ENCODE measurements at regions of chr10 and their contacts with region 1.

Region 1: DNA sequence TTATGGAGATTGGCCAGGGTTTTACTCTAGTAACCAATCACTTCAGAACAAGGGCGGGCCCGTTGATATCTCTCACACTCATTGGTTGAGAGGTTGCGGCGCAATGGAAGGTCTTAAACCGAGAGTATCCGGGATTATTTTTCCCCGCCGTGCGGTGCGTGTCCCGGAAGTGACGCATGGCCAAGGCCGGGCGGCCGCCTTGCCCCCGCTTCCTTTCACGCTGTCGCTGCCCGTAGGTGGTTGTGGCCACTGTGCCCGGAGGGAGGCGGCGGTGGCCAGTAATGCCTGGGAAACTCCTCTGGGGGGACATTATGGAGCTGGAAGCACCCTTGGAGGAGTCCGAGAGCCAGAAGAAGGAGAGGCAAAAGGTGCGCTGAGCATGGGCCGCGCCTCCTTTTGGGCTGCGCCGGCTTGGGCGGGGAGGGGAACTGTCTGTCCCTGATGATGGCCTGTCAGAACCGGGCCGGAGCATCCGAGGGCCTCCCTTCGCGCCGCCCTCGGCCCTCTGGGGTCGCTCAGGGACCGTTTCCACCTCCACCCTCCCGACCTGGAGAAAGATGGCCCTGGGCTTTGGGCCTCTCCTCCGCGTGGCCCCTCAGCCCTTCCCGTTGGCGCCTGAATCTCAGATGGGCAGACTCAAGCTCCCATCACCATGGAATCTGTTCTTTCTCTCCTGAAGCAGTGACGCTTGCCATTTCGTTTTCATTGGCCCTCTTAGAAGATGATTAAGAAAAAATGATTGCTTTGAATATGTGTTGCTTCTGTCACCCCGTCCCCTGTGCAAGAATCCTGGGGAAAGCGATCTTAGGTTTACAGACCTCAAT is at the start of gene DDX50:
- DNase-seq: peak; percentile 86 to 97 (median 95)
- ATAC-seq: peak; percentile 98
- H3K4me3 ChIP-seq: peak within 1 kb of the TSS; percentile 78
- H3K4me3 Mint-ChIP-seq: peak within 1 kb of the TSS; percentile 93 to 99 (median 97)
- H3K27ac ChIP-seq: peak within 1 kb of the TSS; percentile 95
- H3K27ac Mint-ChIP-seq: peak within 1 kb of the TSS; percentile 97 to 100 (median 99)
- H3K4me1 ChIP-seq: peaks cover 20 to 34% of the 10 kb centered on the region in 2 donors
- H3K4me1 Mint-ChIP-seq: peaks cover 28 to 53% (median 44%) of the 10 kb centered on the region in 7 donors
- H3K27me3 ChIP-seq: no peaks in the 10 kb centered on the region
- H3K27me3 Mint-ChIP-seq: no peaks in the 10 kb centered on the region
- total RNA-seq, gene DDX50: 28.3 to 49.3 (median 47.5) TPM

Region 2: GRCh38 chr10:68074775-68075549 is 826.4 kb before region 1 on chr10 and contains the start of gene HERC4:
- CTCF ChIA-PET with region 1: no interaction called
- POLR2A ChIA-PET with region 1: no interaction called
- intact Hi-C with region 1: loop called in 1 of 2 experiments (anchors 1 kb)
- DNase-seq: peak; percentile 80 to 91 (median 89)
- ATAC-seq: peak; percentile 97
- H3K4me3 ChIP-seq: peak within 1 kb of the TSS; percentile 91
- H3K4me3 Mint-ChIP-seq: peak within 1 kb of the TSS; percentile 91 to 98 (median 96)
- H3K27ac ChIP-seq: peak within 1 kb of the TSS; percentile 96
- H3K27ac Mint-ChIP-seq: peak within 1 kb of the TSS; percentile 89 to 95 (median 94)
- H3K4me1 ChIP-seq: peaks cover 15 to 21% of the 10 kb centered on the region in 2 donors
- H3K4me1 Mint-ChIP-seq: peaks cover 26 to 51% (median 41%) of the 10 kb centered on the region in 7 donors
- H3K27me3 ChIP-seq: peaks cover 0 to 3% of the 10 kb centered on the region in 2 donors
- H3K27me3 Mint-ChIP-seq: peaks cover 0 to 2% (median 0%) of the 10 kb centered on the region in 5 donors
- total RNA-seq, gene HERC4: 65.7 to 113 (median 78.6) TPM

Region 3: GRCh38 chr10:68471586-68472408 is 429.5 kb before region 1 on chr10 and contains the start of gene DNA2:
- CTCF ChIA-PET with region 1: no interaction called
- POLR2A ChIA-PET with region 1: no interaction called
- intact Hi-C with region 1: loop called in 1 of 2 experiments (anchors 1 kb)
- DNase-seq: peak; percentile 54 to 85 (median 67)
- ATAC-seq: peak; percentile 84
- H3K4me3 ChIP-seq: peak within 1 kb of the TSS; percentile 72
- H3K4me3 Mint-ChIP-seq: peak within 1 kb of the TSS; percentile 95 to 100 (median 98)
- H3K27ac ChIP-seq: peak within 1 kb of the TSS; percentile 69
- H3K27ac Mint-ChIP-seq: peak within 1 kb of the TSS; percentile 54 to 99 (median 86)
- H3K4me1 ChIP-seq: peaks cover 0 to 5% of the 10 kb centered on the region in 2 donors
- H3K4me1 Mint-ChIP-seq: peaks cover 6 to 26% (median 14%) of the 10 kb centered on the region in 7 donors
- H3K27me3 ChIP-seq: no peaks in the 10 kb centered on the region
- H3K27me3 Mint-ChIP-seq: no peaks in the 10 kb centered on the region
- total RNA-seq, gene DNA2: 3.8 to 40.2 (median 6.3) TPM

Region 4: GRCh38 chr10:68792115-68792514 is 109.2 kb before region 1 on chr10:
- CTCF ChIA-PET with region 1: interaction called, 3 read pairs
- POLR2A ChIA-PET with region 1: no interaction called
- intact Hi-C with region 1: loop called (anchors 2 kb)
- DNase-seq: peak in 2 of 9 donors; percentile 7 to 23
- ATAC-seq: no peak
- H3K4me3 ChIP-seq: no peak overlapping the region
- H3K4me3 Mint-ChIP-seq: no peak overlapping the region
- H3K27ac ChIP-seq: no peak overlapping the region
- H3K27ac Mint-ChIP-seq: no peak overlapping the region
- H3K4me1 ChIP-seq: no peaks in the 10 kb centered on the region
- H3K4me1 Mint-ChIP-seq: no peaks in the 10 kb centered on the region
- H3K27me3 ChIP-seq: no peaks in the 10 kb centered on the region
- H3K27me3 Mint-ChIP-seq: no peaks in the 10 kb centered on the region

Region 5: GRCh38 chr10:69087590-69088470 is 186.5 kb after region 1 on chr10 and contains the start of gene SRGN:
- CTCF ChIA-PET with region 1: no interaction called
- POLR2A ChIA-PET with region 1: no interaction called
- intact Hi-C with region 1: loop called (anchors 1 to 2 kb)
- DNase-seq: peak; percentile 54 to 94 (median 87)
- ATAC-seq: peak; percentile 76
- H3K4me3 ChIP-seq: peak within 1 kb of the TSS; percentile 84
- H3K4me3 Mint-ChIP-seq: peak within 1 kb of the TSS; percentile 85 to 95 (median 93)
- H3K27ac ChIP-seq: peak within 1 kb of the TSS; percentile 97
- H3K27ac Mint-ChIP-seq: peak within 1 kb of the TSS; percentile 93 to 99 (median 98)
- H3K4me1 ChIP-seq: peaks cover 28 to 46% of the 10 kb centered on the region in 2 donors
- H3K4me1 Mint-ChIP-seq: peaks cover 25 to 66% (median 58%) of the 10 kb centered on the region in 7 donors
- H3K27me3 ChIP-seq: no peaks in the 10 kb centered on the region
- H3K27me3 Mint-ChIP-seq: no peaks in the 10 kb centered on the region
- total RNA-seq, gene SRGN: 66.6 to 748 (median 227) TPM

Measured in naive thymus-derived CD4-positive, alpha-beta T cell (primary cell).